Caco-2 (cell line): ENCODE measurements at regions of chr5 and their contacts with region 1.

Region 1: DNA sequence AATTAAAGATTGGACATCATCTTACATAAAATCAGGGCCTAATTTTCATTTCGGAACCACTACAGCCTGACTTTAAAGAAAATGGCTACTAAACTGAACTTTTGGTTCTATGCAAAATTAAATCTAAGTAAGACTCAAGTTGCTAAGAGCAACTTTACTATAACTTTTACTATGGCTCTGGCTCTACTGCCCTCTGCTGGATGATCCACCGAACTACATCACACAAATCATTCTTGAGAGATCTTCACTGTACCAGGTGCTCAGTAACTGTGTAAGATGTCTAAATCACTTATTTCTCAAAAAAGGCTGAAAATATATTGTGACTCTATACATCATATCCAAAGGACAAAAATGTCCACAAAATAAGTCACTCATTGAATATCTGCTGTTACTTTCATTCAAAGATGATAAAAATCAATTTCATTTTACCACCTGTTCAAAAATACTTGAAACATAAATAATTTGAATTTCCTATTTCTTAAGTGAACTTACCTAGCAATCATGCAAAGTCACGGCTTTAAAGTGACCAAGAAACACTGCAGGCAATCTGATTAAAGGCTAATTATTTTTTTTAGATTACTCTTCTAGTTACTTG is 13.5 kb downstream of the MOCS2 start:
- DNase-seq: peak; percentile 55 to 65
- H3K4me3 ChIP-seq: no peak overlapping the region
- H3K4me3 Mint-ChIP-seq: no peak overlapping the region
- H3K27ac Mint-ChIP-seq: no peak overlapping the region
- H3K4me1 ChIP-seq: peaks cover 10% of the 10 kb centered on the region
- H3K4me1 Mint-ChIP-seq: peaks cover 8% of the 10 kb centered on the region
- H3K27me3 ChIP-seq: no peaks in the 10 kb centered on the region
- H3K27me3 Mint-ChIP-seq: no peaks in the 10 kb centered on the region
- CTCF ChIP-seq: peak; percentile 73

Region 2: DNA sequence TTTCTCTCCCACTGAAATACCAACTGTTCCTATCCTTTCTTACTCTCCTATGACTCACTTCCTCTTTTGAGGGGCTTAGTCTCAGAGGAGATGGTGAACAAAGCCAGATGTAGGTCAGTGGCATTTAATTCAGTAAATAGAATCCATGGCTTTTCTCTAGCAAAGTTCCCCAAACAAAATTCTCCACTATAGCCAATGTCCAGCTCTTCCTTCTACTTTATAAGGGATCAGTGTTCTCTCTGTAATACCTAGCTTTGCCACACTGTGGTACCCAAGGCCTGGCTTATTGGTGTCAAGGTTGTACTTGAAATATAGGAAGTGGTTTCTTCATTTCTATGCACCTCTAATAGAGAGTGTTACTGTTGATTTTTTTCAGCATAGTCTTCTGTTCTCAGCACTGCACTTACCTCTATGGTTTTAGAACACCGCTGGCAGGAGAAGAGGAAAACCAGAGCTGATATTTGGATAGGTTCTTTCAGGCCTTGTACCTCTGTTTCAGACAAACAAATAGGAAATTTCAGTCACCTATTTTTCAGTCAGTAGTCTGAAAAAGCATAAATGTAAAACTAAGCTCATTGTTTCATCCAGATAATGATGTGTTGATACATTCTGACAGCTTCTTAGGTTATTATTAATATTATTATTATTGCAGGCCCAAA is 147.5 kb before region 1 on chr5:
- CTCF ChIA-PET with region 1: interaction called, 15 read pairs
- POLR2A ChIA-PET with region 1: no interaction called
- intact Hi-C with region 1: loop called (anchors 1 kb)
- DNase-seq: peak; percentile 75 to 76
- H3K4me3 ChIP-seq: no peak overlapping the region
- H3K4me3 Mint-ChIP-seq: no peak overlapping the region
- H3K27ac Mint-ChIP-seq: no peak overlapping the region
- H3K4me1 ChIP-seq: peaks cover 8% of the 10 kb centered on the region; the same call in 1 of the 2 replicates
- H3K4me1 Mint-ChIP-seq: peaks cover 7% of the 10 kb centered on the region
- H3K27me3 ChIP-seq: no peaks in the 10 kb centered on the region
- H3K27me3 Mint-ChIP-seq: no peaks in the 10 kb centered on the region
- CTCF ChIP-seq: peak; percentile 78 to 86

Region 3: GRCh38 chr5:52989781-52990527 is 106.1 kb before region 1 on chr5:
- CTCF ChIA-PET with region 1: no interaction called
- POLR2A ChIA-PET with region 1: no interaction called
- intact Hi-C with region 1: loop called (anchors 1 kb)
- DNase-seq: peak; percentile 65 to 68
- H3K4me3 ChIP-seq: peak overlapping the region; percentile 56
- H3K4me3 Mint-ChIP-seq: peak overlapping the region; percentile 85
- H3K27ac Mint-ChIP-seq: peak overlapping the region; percentile 60
- H3K4me1 ChIP-seq: peaks cover 22% of the 10 kb centered on the region
- H3K4me1 Mint-ChIP-seq: peaks cover 34% of the 10 kb centered on the region
- H3K27me3 ChIP-seq: no peaks in the 10 kb centered on the region
- H3K27me3 Mint-ChIP-seq: no peaks in the 10 kb centered on the region
- CTCF ChIP-seq: peak; percentile 25 to 67